PC-3 (cell line): ENCODE measurements at regions of chrX and their contacts with region 1.

Region 1: DNA sequence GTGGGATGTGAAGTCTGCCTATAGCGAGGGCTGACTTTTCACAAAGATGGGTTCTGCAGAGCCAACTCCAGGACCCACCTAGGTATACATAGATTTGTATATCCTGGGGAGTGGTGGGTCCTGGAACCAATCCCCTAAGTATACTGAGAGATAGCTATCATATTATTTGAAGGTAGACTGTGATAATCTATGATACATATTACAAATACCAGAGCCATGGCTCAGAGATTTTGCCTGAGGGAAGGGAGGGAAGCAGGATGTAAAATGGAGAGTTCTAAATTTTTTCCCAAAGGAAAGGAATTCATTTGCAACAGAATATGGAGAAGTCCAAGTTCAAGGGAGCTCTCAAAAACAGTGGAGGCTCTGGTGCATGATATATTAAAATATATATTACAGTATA is 7.2 kb downstream of the TCEAL3 start:
- DNase-seq: peak; percentile 90
- ATAC-seq: peak; percentile 72
- H3K4me3 ChIP-seq: peak overlapping the region; percentile 0; the same call in 1 of the 2 replicates
- H3K27ac ChIP-seq: peak overlapping the region; percentile 97
- H3K4me1 ChIP-seq: peaks cover 42% of the 10 kb centered on the region
- H3K27me3 ChIP-seq: no peaks in the 10 kb centered on the region
- CTCF ChIP-seq: no peak

Region 2: DNA sequence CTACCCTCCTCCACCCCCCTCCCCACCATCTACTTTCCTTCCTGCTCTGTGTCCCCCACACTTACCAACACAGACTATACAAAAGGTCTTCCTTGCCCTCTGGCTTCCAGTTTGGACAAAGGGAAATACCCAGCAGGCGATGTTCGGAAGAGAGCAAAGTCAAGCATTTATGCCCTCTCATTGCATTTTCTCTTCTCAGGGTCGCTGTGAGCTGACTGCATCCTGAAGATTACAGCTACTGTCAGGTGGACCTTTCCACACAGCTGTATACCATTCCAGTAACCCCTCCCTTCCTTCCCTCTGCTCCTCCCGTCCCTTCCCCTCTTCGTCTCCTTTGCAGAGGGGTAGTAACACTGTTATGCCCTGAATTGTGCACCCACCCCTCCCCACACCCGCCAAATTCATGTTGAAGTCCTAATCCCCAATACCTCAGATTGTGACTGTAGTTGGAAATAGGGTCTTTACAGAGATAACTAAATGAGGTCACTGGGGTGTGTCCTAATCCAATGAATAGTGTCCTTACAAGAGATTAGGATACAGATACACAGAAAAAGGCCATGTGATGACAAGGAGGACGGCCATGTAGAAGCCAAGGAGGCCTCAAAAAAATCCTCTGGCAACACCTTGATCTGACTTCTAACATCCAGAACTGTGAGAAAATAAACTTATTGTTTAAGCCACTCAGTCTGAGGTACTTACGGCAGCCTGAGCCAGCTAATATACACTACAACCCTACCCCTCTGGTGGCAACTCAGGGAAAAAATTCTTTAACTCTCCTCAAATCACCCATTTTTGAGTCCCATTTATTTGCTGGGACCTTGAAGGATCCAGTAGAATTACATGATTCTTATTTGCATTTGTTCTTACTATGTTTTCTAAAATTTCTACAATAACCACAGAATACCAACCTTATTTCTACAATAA is 59.8 kb after region 1 on chrX:
- CTCF ChIA-PET with region 1: no interaction called
- POLR2A ChIA-PET with region 1: no interaction called
- intact Hi-C with region 1: loop called (anchors 1 kb)
- DNase-seq: no peak
- ATAC-seq: peak; percentile 38
- H3K4me3 ChIP-seq: no peak overlapping the region
- H3K27ac ChIP-seq: no peak overlapping the region
- H3K4me1 ChIP-seq: peaks cover 11% of the 10 kb centered on the region
- H3K27me3 ChIP-seq: no peaks in the 10 kb centered on the region
- CTCF ChIP-seq: no peak